H1 (cell line): ENCODE measurements at regions of chr7 and their contacts with region 1.

Region 1: GRCh38 chr7:104252404-104253134 is 44.8 kb upstream of the ORC5 start:
- DNase-seq: no peak
- H3K4me3 ChIP-seq: no peak overlapping the region
- H3K27ac ChIP-seq: no peak overlapping the region
- H3K4me1 ChIP-seq: no peaks in the 10 kb centered on the region
- H3K27me3 ChIP-seq: peaks cover 0 to 1% (median 0%) of the 10 kb centered on the region in 4 experiments; a peak in 1 of 7 replicates
- CTCF ChIP-seq: peak in 2 of 3 experiments; percentile 13 to 39; a peak in 2 of 4 replicates
- EP300 ChIP-seq: no peak
- POLR2A ChIP-seq: no peak
- RAD21 ChIP-seq: peak; percentile 14 to 17; a peak in 1 of 4 replicates

Region 2: GRCh38 chr7:104231054-104232046 is 21.2 kb before region 1 on chr7:
- CTCF ChIA-PET with region 1: interaction called, 14 read pairs
- POLR2A ChIA-PET with region 1: no interaction called
- DNase-seq: peak in 1 of 2 experiments; percentile 68
- H3K4me3 ChIP-seq: peak overlapping the region in 1 of 4 experiments; percentile 22; a peak in 1 of 8 replicates
- H3K27ac ChIP-seq: no peak overlapping the region
- H3K4me1 ChIP-seq: peaks cover 0 to 6% (median 2%) of the 10 kb centered on the region in 4 experiments; a peak in 3 of 7 replicates
- H3K27me3 ChIP-seq: no peaks in the 10 kb centered on the region
- CTCF ChIP-seq: peak; percentile 65 to 88 (median 84)
- EP300 ChIP-seq: no peak
- POLR2A ChIP-seq: no peak
- RAD21 ChIP-seq: peak; percentile 85 to 91

Region 3: DNA sequence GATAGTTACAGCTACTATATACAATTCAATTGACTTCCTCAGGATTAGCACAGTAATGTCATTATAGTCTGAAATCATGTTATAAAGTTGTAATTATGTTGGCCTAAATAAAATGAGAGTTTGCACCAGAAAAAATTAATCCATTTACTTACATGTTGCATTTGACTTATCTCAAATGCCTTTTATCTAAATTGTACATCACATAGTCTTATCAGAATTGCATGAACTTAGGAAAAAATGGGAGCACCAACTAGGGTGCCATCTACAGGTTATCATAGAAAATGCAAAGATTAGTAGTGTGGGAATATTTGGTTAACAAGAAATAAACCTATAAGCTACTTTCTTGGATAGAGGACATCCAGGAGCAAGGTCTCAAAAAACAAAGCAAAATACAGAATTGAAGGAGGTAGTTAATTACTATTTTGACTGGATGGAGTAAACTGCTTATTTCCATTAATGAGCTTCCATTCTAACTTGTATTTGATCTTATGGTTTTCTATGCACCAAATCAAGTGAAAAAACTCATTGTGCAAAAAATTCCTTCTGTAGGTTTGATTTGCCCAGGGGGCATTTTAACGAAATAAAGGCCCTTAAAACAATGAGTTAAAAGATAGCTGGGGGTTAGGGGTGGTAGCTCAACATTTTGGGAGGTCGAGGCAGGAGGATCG is 15.3 kb after region 1 on chr7:
- CTCF ChIA-PET with region 1: interaction called, 12 read pairs
- POLR2A ChIA-PET with region 1: no interaction called
- DNase-seq: no peak
- H3K4me3 ChIP-seq: no peak overlapping the region
- H3K27ac ChIP-seq: no peak overlapping the region
- H3K4me1 ChIP-seq: no peaks in the 10 kb centered on the region
- H3K27me3 ChIP-seq: no peaks in the 10 kb centered on the region
- CTCF ChIP-seq: peak in 1 of 3 experiments; percentile 43; a peak in 1 of 4 replicates
- EP300 ChIP-seq: no peak
- POLR2A ChIP-seq: no peak
- RAD21 ChIP-seq: peak in 1 of 2 experiments; percentile 14; a peak in 1 of 4 replicates

Region 4: DNA sequence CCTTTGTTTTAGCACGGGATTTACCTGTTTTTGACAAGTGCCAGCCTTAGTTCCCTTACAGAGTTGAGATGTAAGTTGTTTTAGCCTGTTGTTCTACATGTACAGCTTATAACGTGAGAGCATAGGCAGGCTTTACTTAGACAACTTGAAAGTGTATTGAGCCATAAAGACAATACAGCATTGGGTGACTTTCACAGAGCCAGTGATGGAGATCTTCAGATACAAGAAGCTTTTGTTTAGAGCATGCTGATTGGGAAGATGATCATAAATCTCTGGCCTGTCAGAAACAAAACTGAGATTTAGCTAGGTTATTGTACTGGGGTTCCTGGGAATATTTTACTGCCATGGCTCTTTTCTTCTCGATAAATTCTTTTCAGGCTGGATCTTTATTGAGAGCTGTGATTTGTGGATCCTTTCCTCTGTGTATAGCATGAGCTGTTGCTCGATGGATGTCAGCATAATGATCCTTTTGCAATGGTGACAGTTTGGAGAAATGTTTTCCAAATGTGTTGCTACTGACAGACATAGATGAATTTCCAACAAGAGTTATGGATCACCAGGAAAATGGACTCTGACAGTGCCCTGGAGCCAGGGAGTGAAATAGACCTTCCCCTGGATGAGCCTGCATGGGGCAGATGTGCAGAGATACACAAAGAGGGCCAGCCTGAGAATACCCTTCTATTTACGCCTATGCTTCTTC is 106.0 kb after region 1 on chr7:
- CTCF ChIA-PET with region 1: no interaction called
- POLR2A ChIA-PET with region 1: no interaction called
- DNase-seq: no peak
- H3K4me3 ChIP-seq: no peak overlapping the region
- H3K27ac ChIP-seq: no peak overlapping the region
- H3K4me1 ChIP-seq: peaks cover 0 to 5% (median 3%) of the 10 kb centered on the region in 4 experiments; a peak in 4 of 7 replicates
- H3K27me3 ChIP-seq: no peaks in the 10 kb centered on the region
- CTCF ChIP-seq: no peak
- EP300 ChIP-seq: no peak
- POLR2A ChIP-seq: no peak
- RAD21 ChIP-seq: no peak